Natural killer cell (primary cell): ENCODE measurements at regions of chr14 and their contacts with region 1.

Region 1: GRCh38 chr14:51846631-51847488 is 13.6 kb upstream of the GNG2 start:
- DNase-seq: peak; percentile 82 to 97
- ATAC-seq: peak; percentile 68 to 90 (median 80)
- H3K4me3 ChIP-seq: peak overlapping the region; percentile 33
- H3K4me3 Mint-ChIP-seq: peak overlapping the region; percentile 89
- H3K27ac ChIP-seq: peak overlapping the region; percentile 98
- H3K27ac Mint-ChIP-seq: peak overlapping the region; percentile 97 to 98
- H3K4me1 ChIP-seq: peaks cover 61% of the 10 kb centered on the region
- H3K4me1 Mint-ChIP-seq: peaks cover 74 to 87% of the 10 kb centered on the region in 2 donors
- H3K27me3 ChIP-seq: no peaks in the 10 kb centered on the region
- H3K27me3 Mint-ChIP-seq: no peaks in the 10 kb centered on the region
- CTCF ChIP-seq: no peak

Region 2: GRCh38 chr14:51828017-51828797 is 18.7 kb before region 1 on chr14:
- intact Hi-C with region 1: loop called (anchors 2 kb)
- DNase-seq: peak; percentile 62 to 74
- ATAC-seq: peak; percentile 94 to 96 (median 94)
- H3K4me3 ChIP-seq: no peak overlapping the region
- H3K4me3 Mint-ChIP-seq: no peak overlapping the region
- H3K27ac ChIP-seq: no peak overlapping the region
- H3K27ac Mint-ChIP-seq: no peak overlapping the region
- H3K4me1 ChIP-seq: peaks cover 17% of the 10 kb centered on the region
- H3K4me1 Mint-ChIP-seq: peaks cover 5 to 6% of the 10 kb centered on the region in 2 donors
- H3K27me3 ChIP-seq: no peaks in the 10 kb centered on the region
- H3K27me3 Mint-ChIP-seq: no peaks in the 10 kb centered on the region
- CTCF ChIP-seq: no peak

Region 3: DNA sequence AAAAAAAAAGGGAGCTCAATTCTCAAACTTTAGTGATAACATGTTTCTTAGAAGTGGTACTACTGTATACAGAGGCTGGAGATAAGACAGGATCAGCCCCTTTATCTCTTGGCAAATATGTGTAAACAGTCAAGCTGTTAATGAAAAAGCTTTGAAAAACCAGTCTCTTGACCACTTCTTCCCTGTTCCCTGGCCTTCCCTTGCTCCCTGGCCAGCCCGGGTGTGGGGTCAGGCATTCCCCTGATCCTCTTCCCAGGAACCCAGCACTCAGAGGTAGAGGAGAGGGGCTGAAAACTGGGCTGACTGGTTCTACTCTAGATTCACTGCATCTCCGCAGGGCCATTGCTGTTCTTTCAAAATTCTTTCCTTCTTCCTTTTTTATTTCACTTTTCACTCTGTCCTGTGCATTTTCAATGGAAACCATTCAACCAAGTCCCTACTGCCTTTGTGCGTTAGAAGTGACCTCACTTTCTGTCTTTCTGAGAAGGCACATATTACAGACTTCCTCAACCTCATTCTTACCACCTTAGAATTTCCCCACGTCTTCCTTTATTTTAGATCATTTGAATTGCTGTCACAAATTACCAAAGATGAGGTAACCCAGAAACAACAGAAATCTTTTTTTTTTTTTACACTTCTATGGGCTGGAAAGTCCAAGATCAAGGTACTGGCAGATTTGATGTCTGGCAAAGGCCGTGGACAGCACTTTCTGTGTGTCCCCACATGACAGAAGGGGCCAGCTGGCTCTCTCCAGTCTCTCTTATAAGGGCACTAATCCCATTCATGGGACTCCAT is 19.3 kb after region 1 on chr14:
- intact Hi-C with region 1: loop called (anchors 1 kb)
- DNase-seq: peak; percentile 54 to 76
- ATAC-seq: peak; percentile 47 to 74 (median 69)
- H3K4me3 ChIP-seq: no peak overlapping the region
- H3K4me3 Mint-ChIP-seq: no peak overlapping the region
- H3K27ac ChIP-seq: peak overlapping the region; percentile 82
- H3K27ac Mint-ChIP-seq: no peak overlapping the region
- H3K4me1 ChIP-seq: peaks cover 50% of the 10 kb centered on the region
- H3K4me1 Mint-ChIP-seq: peaks cover 32 to 36% of the 10 kb centered on the region in 2 donors
- H3K27me3 ChIP-seq: no peaks in the 10 kb centered on the region
- H3K27me3 Mint-ChIP-seq: no peaks in the 10 kb centered on the region
- CTCF ChIP-seq: no peak

Region 4: GRCh38 chr14:51901475-51902024 is 54.7 kb after region 1 on chr14:
- intact Hi-C with region 1: loop called (anchors 1 kb)
- DNase-seq: peak in 1 of 2 donors; percentile 66
- ATAC-seq: peak; percentile 20 to 37 (median 32)
- H3K4me3 ChIP-seq: no peak overlapping the region
- H3K4me3 Mint-ChIP-seq: peak overlapping the region; percentile 53
- H3K27ac ChIP-seq: no peak overlapping the region
- H3K27ac Mint-ChIP-seq: peak overlapping the region; percentile 86 to 94
- H3K4me1 ChIP-seq: peaks cover 22% of the 10 kb centered on the region
- H3K4me1 Mint-ChIP-seq: peaks cover 86 to 91% of the 10 kb centered on the region in 2 donors
- H3K27me3 ChIP-seq: no peaks in the 10 kb centered on the region
- H3K27me3 Mint-ChIP-seq: no peaks in the 10 kb centered on the region
- CTCF ChIP-seq: no peak

Region 5: DNA sequence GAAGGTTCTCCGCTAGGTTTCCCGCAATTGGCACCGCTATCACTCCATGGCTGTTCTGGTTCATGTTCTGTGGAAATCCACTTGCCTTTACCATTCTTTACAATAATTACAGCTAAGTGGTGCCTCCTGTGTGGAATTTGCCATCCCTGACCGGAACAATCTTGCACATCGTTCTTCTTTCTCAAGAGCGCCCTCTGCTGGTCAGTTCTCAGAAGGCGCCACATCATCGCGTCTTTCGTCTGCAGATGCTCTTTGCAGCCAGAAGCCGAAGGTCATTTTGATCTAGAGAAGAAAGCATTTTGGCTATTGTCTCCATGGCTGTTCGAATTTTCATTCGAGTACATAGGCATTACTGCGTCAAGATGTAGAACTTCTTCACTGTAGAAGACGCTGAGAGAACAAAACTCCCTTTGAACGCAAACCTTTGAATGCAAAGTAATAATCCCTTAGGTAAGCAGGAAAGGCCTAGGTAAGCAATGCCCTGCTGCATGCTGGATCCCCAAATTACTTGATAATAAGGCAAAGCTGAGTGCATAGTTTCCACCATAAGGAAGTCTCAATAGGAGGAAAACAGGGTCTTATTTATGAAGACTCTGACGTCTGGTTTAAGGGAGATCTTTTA is 132.3 kb after region 1 on chr14:
- intact Hi-C with region 1: loop called (anchors 1 kb)
- DNase-seq: peak; percentile 79 to 90
- ATAC-seq: peak; percentile 79 to 98 (median 86)
- H3K4me3 ChIP-seq: no peak overlapping the region
- H3K4me3 Mint-ChIP-seq: no peak overlapping the region
- H3K27ac ChIP-seq: no peak overlapping the region
- H3K27ac Mint-ChIP-seq: no peak overlapping the region
- H3K4me1 ChIP-seq: peaks cover 7% of the 10 kb centered on the region
- H3K4me1 Mint-ChIP-seq: peaks cover 12 to 17% of the 10 kb centered on the region in 2 donors
- H3K27me3 ChIP-seq: no peaks in the 10 kb centered on the region
- H3K27me3 Mint-ChIP-seq: no peaks in the 10 kb centered on the region
- CTCF ChIP-seq: peak; percentile 92

Region 6: DNA sequence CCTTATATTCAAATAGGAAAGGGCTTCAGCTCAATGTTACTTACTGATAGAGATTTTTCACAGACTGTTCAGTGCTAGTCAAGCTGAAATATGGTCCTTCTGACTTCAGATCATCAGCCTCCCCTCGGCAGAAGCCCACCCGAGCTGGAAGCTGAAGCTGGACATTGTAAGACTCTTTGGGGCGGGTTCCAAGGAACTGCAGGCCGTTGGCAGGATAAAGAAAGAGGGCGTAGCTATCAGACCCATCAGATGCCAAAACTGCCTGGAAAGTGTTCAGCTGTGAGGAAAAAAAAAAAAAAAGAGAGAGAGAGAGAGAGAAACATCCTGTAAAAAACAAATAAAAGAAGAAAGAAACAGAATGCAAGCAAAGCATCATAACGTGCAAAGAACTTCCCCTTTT is 213.2 kb after region 1 on chr14:
- intact Hi-C with region 1: no loop called
- DNase-seq: no peak
- ATAC-seq: no peak
- H3K4me3 ChIP-seq: no peak overlapping the region
- H3K4me3 Mint-ChIP-seq: no peak overlapping the region
- H3K27ac ChIP-seq: no peak overlapping the region
- H3K27ac Mint-ChIP-seq: no peak overlapping the region
- H3K4me1 ChIP-seq: no peaks in the 10 kb centered on the region
- H3K4me1 Mint-ChIP-seq: no peaks in the 10 kb centered on the region
- H3K27me3 ChIP-seq: peaks cover 3% of the 10 kb centered on the region
- H3K27me3 Mint-ChIP-seq: peaks cover 20 to 66% of the 10 kb centered on the region in 2 donors
- CTCF ChIP-seq: no peak

Region 7: GRCh38 chr14:52325126-52325525 is 478.3 kb after region 1 on chr14:
- intact Hi-C with region 1: loop called (anchors 5 kb)
- DNase-seq: peak; percentile 37 to 63
- ATAC-seq: peak; percentile 83 to 94 (median 92)
- H3K4me3 ChIP-seq: no peak overlapping the region
- H3K4me3 Mint-ChIP-seq: peak overlapping the region; percentile 88
- H3K27ac ChIP-seq: peak overlapping the region; percentile 53
- H3K27ac Mint-ChIP-seq: peak overlapping the region; percentile 83 to 95
- H3K4me1 ChIP-seq: peaks cover 47% of the 10 kb centered on the region
- H3K4me1 Mint-ChIP-seq: peaks cover 87 to 89% of the 10 kb centered on the region in 2 donors
- H3K27me3 ChIP-seq: no peaks in the 10 kb centered on the region
- H3K27me3 Mint-ChIP-seq: no peaks in the 10 kb centered on the region
- CTCF ChIP-seq: no peak